Cardiac septum (tissue), 1 donor: ENCODE measurements at regions of chr5 and their contacts with region 1.

Region 1: DNA sequence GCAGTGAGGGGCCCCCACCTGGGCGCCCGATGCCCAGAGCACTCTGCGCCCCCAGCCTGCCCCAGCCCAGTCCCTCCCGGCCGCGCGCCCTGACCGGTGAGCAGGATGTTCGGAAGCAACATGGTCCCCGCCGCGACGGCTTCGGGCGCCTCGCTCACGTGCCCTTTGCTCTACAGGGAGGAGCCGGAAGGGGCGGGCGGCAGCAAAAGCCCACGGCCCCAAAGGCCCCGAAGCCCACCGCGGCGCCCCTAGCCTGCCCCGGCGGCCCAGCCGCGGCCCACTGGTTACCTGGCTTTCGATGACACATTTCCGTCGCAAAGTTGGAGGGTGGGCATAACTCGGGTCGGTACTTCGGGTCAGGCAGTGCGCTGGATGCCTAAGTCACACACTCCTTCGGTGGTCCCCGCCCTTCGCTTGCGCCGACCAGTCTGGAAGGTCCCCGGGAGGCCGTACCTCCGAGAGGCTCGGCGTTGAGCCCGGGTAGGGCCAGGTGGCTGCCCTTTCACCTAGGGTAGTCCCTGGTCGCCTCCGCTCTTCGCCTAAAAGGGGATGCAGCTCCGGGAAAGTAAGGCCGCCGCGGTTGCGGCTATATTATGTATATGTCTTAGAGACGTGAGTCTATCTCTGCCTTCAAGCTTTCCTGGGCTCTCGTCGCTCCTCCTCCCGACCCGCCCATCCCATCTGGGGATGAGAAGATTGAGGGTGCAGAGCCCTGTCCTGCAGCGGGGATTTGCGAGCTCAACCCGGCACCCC is at the starts of genes AK6, RAD17 and TAF9:
- DNase-seq: peak; percentile 97
- total RNA-seq, gene AK6: 35.1 TPM
- total RNA-seq, gene RAD17: 22.0 TPM
- total RNA-seq, gene TAF9: 44.2 TPM

Region 2: GRCh38 chr5:69113851-69114250 is 255.7 kb before region 1 on chr5:
- intact Hi-C with region 1: loop called (anchors 10 kb)
- DNase-seq: no peak